HepG2 (cell line): ENCODE measurements at regions of chr2 and their contacts with region 1.

Region 1: DNA sequence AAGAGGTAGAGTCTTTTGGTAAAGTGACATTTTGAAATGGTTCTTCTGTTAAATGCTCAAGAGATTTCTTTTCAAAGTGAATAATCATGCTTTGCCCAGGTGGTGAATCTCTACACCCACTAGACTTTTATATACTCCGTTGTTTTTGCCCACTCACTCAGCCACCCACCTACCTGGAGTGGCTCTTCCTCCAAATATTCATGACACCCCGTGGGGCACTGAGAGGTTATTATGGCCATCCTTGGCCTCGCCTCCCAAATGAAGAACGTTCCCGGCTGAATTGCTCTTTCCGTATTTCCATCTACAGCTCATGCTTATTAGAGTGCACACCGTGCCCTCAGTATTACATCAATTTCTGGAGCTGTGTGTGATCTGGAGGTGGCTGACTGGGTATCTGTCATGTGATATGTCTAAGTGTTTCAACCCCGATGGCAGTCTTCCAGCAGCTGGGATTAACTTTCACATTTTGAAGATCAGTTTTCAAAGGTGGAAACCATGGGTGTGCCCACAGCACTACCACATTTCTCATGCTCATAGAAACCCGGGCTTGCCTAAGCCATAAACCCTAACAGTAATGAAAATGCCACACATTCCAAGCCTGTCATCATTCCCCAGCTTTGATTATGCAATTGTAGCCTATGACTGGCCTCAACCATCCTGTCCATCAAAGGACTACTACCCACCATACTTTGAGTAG is 406.6 kb upstream of the MMADHC start:
- DNase-seq: peak; percentile 12
- ATAC-seq: no peak
- H3K4me3 ChIP-seq: no peak overlapping the region
- H3K27ac ChIP-seq: no peak overlapping the region
- H3K4me1 ChIP-seq: peaks cover 9% of the 10 kb centered on the region
- H3K27me3 ChIP-seq: no peaks in the 10 kb centered on the region
- CTCF ChIP-seq: no peak
- EP300 ChIP-seq: no peak
- POLR2A ChIP-seq: no peak
- RAD21 ChIP-seq: no peak

Region 2: DNA sequence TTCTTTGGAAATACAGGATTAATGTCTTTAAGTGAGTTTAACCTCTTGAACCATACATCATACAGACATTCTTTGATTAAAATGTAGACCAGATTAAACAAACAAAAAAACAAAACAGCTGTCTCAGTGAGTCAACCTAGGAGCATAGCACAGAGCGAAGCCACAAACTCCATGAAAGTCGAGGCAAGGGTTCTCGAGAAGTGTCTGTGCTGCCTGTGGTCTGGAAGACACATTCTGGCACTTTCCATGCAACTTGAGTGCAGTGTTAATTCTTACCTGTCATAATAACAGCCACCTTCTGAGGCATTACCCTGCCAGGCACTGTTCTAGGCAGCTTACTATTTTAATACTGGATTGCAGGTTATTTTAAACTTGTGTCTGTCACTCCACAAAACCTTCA is 28.8 kb after region 1 on chr2:
- CTCF ChIA-PET with region 1: no interaction called
- POLR2A ChIA-PET with region 1: no interaction called
- in situ Hi-C with region 1: no loop called
- intact Hi-C with region 1: no loop called
- DNase-seq: no peak
- ATAC-seq: peak; percentile 54; the same call in 2 of the 3 replicates
- H3K4me3 ChIP-seq: no peak overlapping the region
- H3K27ac ChIP-seq: no peak overlapping the region
- H3K4me1 ChIP-seq: no peaks in the 10 kb centered on the region
- H3K27me3 ChIP-seq: no peaks in the 10 kb centered on the region
- CTCF ChIP-seq: no peak
- EP300 ChIP-seq: no peak
- POLR2A ChIP-seq: no peak
- RAD21 ChIP-seq: no peak

Region 3: DNA sequence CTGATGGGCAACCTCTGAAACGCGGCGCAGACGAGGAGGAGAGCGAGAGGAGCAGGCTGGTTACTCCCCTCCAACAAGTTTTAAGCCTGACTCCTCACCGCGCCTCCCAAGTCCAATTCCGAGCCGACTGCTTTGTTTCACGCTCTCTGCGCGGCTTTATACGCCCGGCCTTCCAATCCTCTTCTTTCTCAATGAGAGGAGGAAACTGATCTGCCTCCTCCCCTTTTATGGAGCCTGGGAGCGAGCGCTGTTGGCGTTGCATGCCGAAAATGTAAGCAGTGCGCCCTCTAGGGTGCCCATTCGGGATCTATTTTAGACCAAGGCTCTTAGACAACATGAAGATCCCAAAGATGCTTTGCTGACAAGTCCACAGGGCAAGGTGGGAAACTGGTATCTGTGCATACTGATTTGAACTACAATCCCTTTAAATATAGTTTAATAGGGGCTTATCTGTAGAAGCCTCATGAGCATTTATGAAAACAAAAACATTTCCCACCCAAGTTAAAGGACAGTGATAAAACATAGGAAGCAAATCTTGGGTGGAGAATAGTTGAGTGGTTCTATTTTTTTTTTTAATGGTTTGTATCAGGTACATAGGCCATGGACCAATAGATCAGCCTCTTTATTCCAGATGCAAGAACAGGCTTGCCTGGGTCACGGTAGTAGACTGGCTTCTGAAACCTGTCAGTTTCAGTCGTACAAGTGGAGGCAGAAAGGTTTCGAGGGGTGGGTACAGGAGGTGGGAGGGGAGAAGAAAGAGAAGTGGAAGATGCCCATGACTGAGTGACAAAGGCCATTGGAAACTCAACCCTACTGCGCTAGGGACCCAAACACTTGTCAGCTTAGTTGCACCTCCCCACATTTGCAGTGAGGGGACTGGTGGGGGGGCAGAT is 493.6 kb after region 1 on chr2 and contains the start of gene RND3:
- CTCF ChIA-PET with region 1: no interaction called
- POLR2A ChIA-PET with region 1: no interaction called
- in situ Hi-C with region 1: no loop called
- intact Hi-C with region 1: loop called (anchors 5 kb)
- DNase-seq: peak; percentile 87
- ATAC-seq: peak; percentile 85
- H3K4me3 ChIP-seq: peak within 1 kb of the TSS; percentile 40 to 56 (median 43); a peak in 4 of 6 replicates
- H3K27ac ChIP-seq: no peak within 1 kb of the TSS
- H3K4me1 ChIP-seq: peaks cover 21% of the 10 kb centered on the region
- H3K27me3 ChIP-seq: peaks cover 6 to 31% of the 10 kb centered on the region in 2 experiments; a peak in 4 of 5 replicates
- CTCF ChIP-seq: peak; percentile 93
- EP300 ChIP-seq: no peak
- POLR2A ChIP-seq: no peak
- RAD21 ChIP-seq: peak; percentile 80
- total RNA-seq, gene RND3: 0.13 and 0.73 TPM in 2 replicates